ENCODE measurements at regions of chr9 and their contacts with region 1.

Region 1: DNA sequence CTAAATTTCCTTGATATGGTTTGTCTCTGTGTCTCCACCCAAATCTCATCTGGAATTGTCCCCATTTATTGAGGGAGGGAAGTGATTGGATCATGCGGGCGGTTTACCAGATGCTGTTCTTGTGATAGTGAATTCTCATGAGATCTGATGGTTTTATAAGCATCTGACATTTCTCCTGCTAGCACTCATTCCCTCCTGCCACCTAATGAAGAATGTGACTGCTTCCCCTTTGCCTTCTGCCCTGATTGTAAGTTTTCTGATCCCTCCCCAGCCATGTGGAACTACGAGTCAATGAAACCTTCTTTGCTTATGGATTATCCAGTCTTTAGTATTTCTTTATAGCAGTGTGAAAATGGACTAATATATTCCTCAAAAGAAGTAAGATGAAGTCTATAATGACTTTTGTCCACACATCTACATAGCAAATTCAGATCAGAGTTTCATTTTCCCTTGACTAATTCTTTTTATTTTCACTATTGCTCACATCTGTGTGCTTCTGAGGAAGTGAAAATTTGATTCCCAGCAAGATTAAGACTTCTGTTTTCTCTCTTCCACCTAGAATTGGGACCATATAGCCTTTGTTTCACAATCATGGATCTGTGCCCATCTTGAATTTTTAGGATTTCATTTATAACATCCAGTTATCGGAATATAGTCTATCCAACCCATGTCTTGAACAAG is 393.5 kb downstream of the DMAC1 start:
- DNase-seq: no peak
- H3K4me3 ChIP-seq: no peak overlapping the region
- H3K27ac ChIP-seq: no peak overlapping the region
- H3K4me1 ChIP-seq: no peaks in the 10 kb centered on the region
- H3K27me3 ChIP-seq: no peaks in the 10 kb centered on the region
- CTCF ChIP-seq: no peak
- POLR2A ChIP-seq: no peak

Region 2: GRCh38 chr9:7342229-7342628 is 63.8 kb before region 1 on chr9:
- intact Hi-C with region 1: no loop called
- DNase-seq: no peak
- H3K4me3 ChIP-seq: no peak overlapping the region
- H3K27ac ChIP-seq: no peak overlapping the region
- H3K4me1 ChIP-seq: no peaks in the 10 kb centered on the region
- H3K27me3 ChIP-seq: no peaks in the 10 kb centered on the region
- CTCF ChIP-seq: no peak
- POLR2A ChIP-seq: no peak

Region 3: GRCh38 chr9:7799234-7799943 is 393.3 kb after region 1 on chr9 and contains the start of gene DMAC1:
- intact Hi-C with region 1: loop called (anchors 5 kb)
- DNase-seq: peak; percentile 46 to 72
- H3K4me3 ChIP-seq: peak within 1 kb of the TSS; percentile 62 to 98 (median 81)
- H3K27ac ChIP-seq: peak within 1 kb of the TSS; percentile 75 to 93
- H3K4me1 ChIP-seq: no peaks in the 10 kb centered on the region
- H3K27me3 ChIP-seq: no peaks in the 10 kb centered on the region
- CTCF ChIP-seq: no peak
- POLR2A ChIP-seq: peak; percentile 13
- total RNA-seq, gene DMAC1: 12.9 to 14.4 (median 13.3) TPM